CD14-positive monocyte (primary cell): ENCODE measurements at regions of chr10 and their contacts with region 1.

Region 1: DNA sequence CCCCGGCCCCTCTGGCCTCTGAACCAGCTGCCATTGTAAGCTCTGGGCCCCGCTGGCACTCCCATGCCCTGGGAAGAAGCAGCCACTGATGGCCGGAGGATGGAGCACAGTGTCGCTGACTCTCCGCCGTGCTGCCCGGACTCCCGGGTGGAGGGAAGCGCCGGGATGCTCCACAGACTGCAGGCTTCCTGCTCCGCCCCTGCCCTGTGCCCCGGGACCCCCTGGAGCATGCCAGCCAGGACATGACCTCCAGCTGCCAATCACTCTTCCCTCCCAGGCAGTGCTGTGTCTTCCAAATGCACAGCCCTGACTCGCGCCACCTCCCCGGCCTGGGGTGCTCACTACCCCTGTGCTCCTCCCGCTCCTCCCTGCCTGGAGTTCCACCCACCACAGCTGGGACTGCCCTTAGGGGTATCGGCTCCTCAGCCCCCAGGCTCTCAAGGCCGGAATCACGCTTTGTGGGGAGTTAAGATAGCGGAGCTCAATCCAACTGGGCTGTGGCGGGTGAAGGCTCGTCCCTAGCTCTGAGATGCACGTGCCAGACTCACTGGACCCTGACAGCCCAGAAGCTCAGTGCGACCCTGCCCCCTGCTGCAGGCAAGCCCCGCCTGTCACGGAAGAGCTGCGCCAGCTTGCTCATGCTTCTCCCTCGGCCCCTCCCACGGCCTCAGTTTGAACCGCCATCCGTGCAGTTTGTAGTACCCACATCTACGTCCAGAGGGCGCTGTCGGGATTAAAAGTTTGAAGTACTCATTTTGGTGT is 142.3 kb upstream of the TCERG1L start:
- DNase-seq: peak; percentile 3 to 17 (median 7)
- H3K4me3 ChIP-seq: no peak overlapping the region
- H3K4me3 Mint-ChIP-seq: peak overlapping the region in 1 of 2 donors; percentile 53
- H3K27ac ChIP-seq: no peak overlapping the region
- H3K27ac Mint-ChIP-seq: no peak overlapping the region
- H3K4me1 ChIP-seq: no peaks in the 10 kb centered on the region
- H3K4me1 Mint-ChIP-seq: no peaks in the 10 kb centered on the region
- H3K27me3 ChIP-seq: peaks cover 2 to 18% of the 10 kb centered on the region in 2 donors
- H3K27me3 Mint-ChIP-seq: peaks cover 24 to 41% (median 30%) of the 10 kb centered on the region in 3 donors
- CTCF ChIP-seq: peak; percentile 94

Region 2: GRCh38 chr10:131874991-131875451 is 421.2 kb after region 1 on chr10:
- intact Hi-C with region 1: loop called (anchors 2 to 5 kb)
- DNase-seq: peak; percentile 67 to 75 (median 72)
- H3K4me3 ChIP-seq: no peak overlapping the region
- H3K4me3 Mint-ChIP-seq: no peak overlapping the region
- H3K27ac ChIP-seq: no peak overlapping the region
- H3K27ac Mint-ChIP-seq: peak overlapping the region in 1 of 7 donors; percentile 58
- H3K4me1 ChIP-seq: no peaks in the 10 kb centered on the region
- H3K4me1 Mint-ChIP-seq: peaks cover 3% of the 10 kb centered on the region
- H3K27me3 ChIP-seq: no peaks in the 10 kb centered on the region
- H3K27me3 Mint-ChIP-seq: peaks cover 3 to 10% (median 6%) of the 10 kb centered on the region in 3 donors
- CTCF ChIP-seq: peak; percentile 83

Region 3: DNA sequence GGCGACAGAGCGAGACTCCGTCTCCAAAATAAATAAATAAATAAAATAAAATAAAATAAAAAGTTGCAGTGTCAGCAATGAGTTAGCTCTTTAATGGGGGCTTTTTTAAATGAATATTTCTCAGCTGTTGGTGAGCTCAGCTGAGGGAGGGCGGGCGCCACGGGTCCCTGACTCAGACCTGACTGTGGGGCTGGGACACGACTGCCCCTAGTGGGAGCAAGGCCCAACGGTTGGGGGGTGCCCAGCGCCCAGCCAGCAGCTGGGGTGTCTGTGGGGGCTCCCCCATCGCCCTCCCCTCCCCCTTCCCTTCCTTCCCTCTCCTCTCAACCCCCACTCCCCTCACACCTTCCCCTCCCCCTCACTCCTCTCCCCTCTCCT is 989.8 kb after region 1 on chr10:
- intact Hi-C with region 1: no loop called
- DNase-seq: peak; percentile 76 to 92 (median 85)
- H3K4me3 ChIP-seq: no peak overlapping the region
- H3K4me3 Mint-ChIP-seq: peak overlapping the region in 1 of 2 donors; percentile 57
- H3K27ac ChIP-seq: no peak overlapping the region
- H3K27ac Mint-ChIP-seq: peak overlapping the region in 2 of 7 donors; percentile 20 to 68
- H3K4me1 ChIP-seq: peaks cover 57 to 62% of the 10 kb centered on the region in 2 donors
- H3K4me1 Mint-ChIP-seq: peaks cover 47% of the 10 kb centered on the region
- H3K27me3 ChIP-seq: no peaks in the 10 kb centered on the region
- H3K27me3 Mint-ChIP-seq: peaks cover 0 to 4% (median 0%) of the 10 kb centered on the region in 3 donors
- CTCF ChIP-seq: peak; percentile 84